Cardiac septum (tissue), 1 donor: ENCODE measurements at regions of chr17 and their contacts with region 1.

Region 1: GRCh38 chr17:42937712-42938596 is 26.3 kb downstream of the AARSD1 start:
- DNase-seq: no peak

Region 2: DNA sequence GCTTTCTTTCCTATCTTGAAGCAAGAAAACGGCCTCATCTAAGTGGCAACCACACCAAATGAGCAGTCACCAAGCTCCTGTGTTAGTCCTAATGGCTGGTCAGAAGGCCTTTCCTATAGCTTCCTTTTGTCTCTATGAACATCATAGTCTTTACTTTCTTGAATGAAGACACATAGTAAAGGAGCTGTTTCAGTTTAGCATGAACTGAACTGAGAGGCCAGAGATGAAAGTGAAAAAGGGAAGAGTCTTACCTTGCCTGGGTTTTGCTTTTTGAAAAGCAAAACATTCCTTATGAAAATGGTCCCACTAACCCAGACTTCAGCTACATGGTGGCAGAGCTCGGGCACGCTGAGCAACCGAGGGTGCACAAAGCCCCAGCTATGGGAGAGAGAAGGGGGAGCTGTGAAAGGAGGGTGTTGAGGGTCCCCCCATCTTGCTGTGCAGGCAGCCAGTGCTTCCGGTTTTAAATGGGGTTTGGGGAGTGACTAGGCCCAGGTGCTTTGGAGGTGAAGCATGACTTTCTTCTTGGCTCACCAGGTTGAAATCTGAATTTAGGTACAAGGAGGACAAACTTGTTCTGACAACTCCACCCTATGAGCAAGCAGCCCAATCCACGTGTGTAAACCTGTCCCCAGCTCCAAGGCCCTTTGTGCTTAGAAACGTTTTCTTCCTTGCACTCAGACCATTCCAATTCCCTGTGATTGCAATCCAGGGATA is 351.3 kb before region 1 on chr17:
- intact Hi-C with region 1: loop called (anchors 10 kb)
- DNase-seq: no peak

Region 3: GRCh38 chr17:42720996-42721583 is 216.9 kb before region 1 on chr17:
- intact Hi-C with region 1: loop called (anchors 10 kb)
- DNase-seq: no peak

Region 4: DNA sequence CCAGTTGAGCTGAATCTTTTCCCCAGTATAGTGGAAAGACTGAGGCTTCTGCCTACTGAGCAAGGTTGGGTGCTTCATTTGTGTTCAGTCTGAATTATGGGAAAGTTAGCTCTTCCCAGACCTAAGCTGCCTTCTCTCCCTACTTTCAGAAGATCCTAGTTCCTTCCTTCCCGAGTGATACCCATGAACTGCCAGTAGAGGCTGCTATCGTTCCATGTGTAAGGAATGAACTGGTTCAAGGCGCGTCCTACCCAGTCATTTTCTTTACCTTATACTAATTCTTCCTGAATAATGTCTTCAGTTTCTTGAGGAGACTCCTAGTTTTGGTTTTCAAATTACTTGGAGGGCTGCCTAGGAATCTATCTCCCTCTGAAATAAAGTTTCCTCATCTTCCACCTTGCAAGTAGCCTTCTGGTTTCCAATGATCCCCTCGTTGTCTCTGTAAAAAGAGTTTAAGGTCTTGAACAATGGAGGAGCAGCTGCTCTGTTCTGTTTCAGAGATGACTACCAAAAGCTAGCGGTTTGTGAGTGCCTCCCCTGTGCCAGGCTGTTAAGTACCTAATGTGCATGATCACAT is 94.5 kb before region 1 on chr17:
- intact Hi-C with region 1: loop called (anchors 1 kb)
- DNase-seq: no peak

Region 5: DNA sequence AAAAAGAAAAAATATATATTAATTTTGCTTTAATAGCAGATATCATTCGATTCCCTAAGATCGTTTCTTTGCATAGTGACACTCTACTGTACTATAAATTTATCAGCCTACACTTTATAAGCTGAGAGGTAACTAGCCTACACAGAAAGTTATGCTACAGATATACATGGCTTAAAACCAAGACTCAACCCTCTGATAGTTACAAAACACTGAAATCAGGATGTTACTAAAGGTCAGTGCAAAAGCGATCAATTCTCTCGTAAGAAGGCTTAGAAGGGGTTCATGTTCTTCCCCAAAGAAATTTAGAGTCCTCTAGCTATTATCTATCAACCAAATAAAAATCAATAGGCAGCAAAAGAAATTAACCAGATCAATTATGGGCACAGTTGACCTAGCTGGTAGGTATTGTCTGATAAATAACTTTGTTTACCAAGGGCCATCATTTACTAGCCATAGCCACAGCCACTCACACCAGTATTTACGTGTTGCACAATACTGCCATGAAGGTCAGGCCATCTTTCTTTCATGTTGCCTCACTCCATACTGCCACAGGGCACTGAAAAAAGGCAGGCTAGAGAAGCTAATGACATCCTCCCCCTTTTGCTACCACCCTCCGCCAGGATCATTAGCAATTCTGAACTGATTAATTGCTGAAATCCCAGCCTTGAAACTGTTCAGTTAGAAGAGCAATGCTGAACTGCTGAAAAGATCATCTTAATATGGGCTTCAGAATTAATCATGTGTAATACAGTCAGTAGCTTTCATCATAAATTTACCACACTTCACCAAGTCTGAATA is 130.8 kb after region 1 on chr17:
- intact Hi-C with region 1: no loop called
- DNase-seq: no peak